ENCODE measurements at regions of chr14 and their contacts with region 1.

Region 1: DNA sequence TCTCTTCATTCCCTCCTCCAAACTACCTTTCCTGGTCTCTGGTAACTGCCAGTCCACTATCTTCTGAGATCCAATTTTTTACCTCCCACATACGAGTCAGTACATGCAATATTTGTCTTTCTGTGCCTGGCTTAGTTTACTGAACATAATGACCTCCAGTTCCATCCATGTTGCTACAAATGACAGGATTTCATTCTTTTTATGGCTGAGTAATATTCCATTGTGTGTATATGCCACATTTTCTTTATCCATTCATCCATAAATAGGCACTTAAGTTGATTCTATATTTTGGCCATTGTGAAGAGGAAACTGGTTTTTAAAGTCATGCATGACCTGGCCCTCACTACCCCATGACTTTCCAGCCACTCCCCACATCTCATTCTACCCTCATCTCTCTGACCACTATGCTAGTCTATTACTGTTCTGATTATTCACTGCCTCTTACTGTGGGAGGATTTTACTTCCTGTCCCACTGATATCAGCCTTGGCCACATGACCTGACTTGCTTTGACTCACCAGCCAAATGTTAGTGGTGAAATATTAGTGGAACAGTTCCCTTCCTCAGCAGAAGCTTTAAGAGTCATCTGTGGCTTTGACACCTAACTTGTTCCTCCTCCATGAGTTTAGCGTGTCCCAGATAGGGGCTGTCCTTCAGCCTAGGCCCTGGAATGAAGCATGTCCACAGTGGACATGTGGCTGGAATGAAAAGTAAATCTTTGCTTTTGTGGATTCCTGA is 52.2 kb downstream of the GOLGA5 start:
- DNase-seq: peak; percentile 46
- ATAC-seq: peak; percentile 52
- H3K4me3 ChIP-seq: no peak overlapping the region
- H3K27ac ChIP-seq: no peak overlapping the region
- H3K4me1 ChIP-seq: no peaks in the 10 kb centered on the region; the same call in 1 of the 2 replicates
- H3K27me3 ChIP-seq: no peaks in the 10 kb centered on the region
- CTCF ChIP-seq: no peak

Region 2: DNA sequence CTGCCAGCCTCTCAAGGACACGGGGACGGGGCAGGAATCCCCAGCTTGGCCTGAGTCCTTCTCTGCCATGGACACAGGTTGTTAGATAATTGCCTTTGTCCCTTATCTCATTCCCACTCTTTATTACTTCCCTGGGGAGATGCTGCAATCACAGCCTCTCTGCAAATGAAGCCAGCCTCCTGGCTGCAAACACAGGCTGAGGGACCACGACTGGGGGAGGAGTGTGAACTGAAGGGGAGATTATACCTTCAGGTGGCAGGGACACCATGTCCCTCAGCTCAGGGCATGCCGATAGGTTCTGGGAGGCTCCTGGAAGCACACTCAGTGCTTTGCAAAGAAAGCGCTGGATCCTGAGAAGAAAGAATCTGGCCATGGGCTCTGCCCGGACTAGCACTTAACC is 60.5 kb after region 1 on chr14:
- CTCF ChIA-PET with region 1: no interaction called
- POLR2A ChIA-PET with region 1: no interaction called
- intact Hi-C with region 1: no loop called
- DNase-seq: no peak
- ATAC-seq: no peak
- H3K4me3 ChIP-seq: no peak overlapping the region
- H3K27ac ChIP-seq: no peak overlapping the region
- H3K4me1 ChIP-seq: no peaks in the 10 kb centered on the region
- H3K27me3 ChIP-seq: peaks cover 46% of the 10 kb centered on the region
- CTCF ChIP-seq: no peak

Region 3: DNA sequence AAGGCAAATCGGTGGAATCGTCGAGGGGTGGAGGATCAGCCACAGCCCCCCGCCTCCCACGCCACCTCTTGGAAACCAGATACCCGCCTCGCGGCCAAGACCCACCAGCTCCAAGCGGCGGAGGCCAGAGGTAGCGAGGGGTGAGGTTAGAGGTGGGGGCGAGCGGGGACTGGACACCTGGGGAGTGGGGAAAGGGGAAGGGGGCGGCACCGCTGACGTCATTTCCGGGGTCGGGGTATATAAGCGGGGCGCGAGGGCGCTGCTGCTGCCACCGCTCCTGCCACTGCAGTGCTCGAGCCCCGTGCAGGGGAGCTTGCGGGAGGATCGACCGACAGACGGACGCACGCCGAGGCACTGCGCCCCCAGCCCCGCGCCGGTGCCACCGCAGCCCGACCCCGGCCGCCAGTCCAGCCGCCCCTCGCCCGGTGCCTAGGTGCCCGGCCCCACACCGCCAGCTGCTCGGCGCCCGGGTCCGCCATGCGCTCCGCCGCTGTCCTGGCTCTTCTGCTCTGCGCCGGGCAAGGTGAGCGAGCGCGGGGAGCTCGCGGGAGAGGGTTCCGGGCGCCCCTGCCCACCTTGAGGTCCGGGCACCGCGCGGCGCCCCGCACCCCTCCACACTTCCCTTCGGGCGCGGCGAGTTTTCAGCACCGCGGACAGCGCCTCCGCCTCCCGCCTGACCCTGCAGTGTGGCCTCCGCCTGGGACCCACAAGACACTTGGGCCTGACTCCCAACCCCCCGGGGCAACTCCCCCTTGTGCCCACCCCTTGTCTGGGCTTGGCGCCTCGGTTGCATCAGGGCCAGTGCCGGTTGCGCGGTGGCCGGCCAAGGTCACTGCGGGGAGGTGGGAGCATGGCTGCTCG is 76.8 kb after region 1 on chr14 and contains the start of gene CHGA:
- CTCF ChIA-PET with region 1: no interaction called
- POLR2A ChIA-PET with region 1: interaction called, 11 read pairs
- intact Hi-C with region 1: no loop called
- DNase-seq: no peak
- ATAC-seq: peak; percentile 43; the same call in 1 of the 2 replicates
- H3K4me3 ChIP-seq: no peak within 1 kb of the TSS
- H3K27ac ChIP-seq: no peak within 1 kb of the TSS
- H3K4me1 ChIP-seq: no peaks in the 10 kb centered on the region
- H3K27me3 ChIP-seq: no peaks in the 10 kb centered on the region
- CTCF ChIP-seq: no peak
- total RNA-seq, gene CHGA: not detected in 2 replicates